ENCODE measurements at regions of chr11 and their contacts with region 1.

Region 1: GRCh38 chr11:2420502-2421225 is 20.1 kb downstream of the TSSC4 start:
- H3K4me3 ChIP-seq: no peak overlapping the region
- H3K27ac ChIP-seq: no peak overlapping the region
- H3K4me1 ChIP-seq: no peaks in the 10 kb centered on the region
- CTCF ChIP-seq: peak; percentile 90

Region 2: DNA sequence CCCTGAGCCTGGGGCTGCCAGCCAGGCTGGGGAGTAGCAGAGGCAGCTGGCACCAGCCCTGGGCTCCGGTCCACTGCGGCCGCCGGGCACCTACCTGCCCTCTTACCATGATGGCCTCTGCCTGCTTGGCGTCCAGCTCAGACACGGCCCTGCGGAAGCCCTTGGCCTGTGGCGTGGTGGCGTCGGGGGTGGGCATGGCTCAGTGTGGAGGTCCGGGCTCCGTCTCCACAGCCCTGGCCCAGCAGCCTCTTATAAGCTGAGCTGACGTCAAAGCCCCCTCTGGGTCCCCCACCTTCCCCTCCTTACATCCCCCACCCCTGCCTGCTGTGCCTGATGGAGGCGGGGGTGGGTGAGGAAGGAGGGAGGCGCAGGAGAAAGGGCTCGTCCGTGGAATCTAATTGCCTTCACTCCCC is 249.1 kb before region 1 on chr11 and contains the start of gene TH:
- CTCF ChIA-PET with region 1: interaction called, 14 read pairs
- POLR2A ChIA-PET with region 1: no interaction called
- H3K4me3 ChIP-seq: no peak within 1 kb of the TSS
- H3K27ac ChIP-seq: no peak within 1 kb of the TSS
- H3K4me1 ChIP-seq: no peaks in the 10 kb centered on the region
- CTCF ChIP-seq: no peak

Region 3: DNA sequence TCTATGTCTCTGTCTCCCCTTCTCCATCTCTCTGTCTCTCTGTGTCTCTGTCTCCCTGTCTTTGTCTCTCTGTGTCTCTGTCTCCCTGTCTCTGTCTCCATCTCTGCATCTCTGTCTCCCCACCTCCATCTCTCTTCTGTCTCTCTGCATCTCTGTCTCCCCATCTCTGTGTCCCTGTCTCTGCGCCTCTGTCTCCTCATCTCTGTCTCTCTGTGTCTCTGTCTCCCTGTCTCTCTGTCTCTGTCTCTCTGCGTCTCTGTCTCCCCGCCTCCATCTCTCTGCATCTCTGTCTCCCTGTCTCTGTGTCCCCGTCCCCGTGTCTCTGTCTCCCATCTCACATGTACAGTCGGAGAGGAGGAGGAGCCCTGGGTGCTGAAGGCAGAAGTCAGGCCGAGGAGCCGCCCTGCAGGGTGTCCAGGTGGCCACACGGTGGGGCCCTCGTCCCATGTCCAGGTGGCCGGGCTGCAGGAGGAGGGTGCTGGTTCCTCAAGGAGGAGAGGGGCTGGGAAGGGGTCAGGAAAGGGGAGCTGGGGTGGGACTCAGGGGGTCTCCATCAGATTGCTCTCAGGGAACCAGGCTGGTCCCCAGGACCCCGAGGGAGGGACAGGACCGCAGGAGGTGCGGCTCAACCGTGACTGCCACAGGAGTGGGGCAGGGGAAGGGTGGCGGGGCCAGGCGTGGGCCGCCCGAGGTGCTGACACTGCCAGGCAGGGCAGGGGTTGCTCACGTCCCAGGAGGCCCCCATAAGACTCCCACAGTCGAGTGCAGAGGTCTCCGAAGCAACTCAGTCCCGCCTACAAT is 223.5 kb before region 1 on chr11:
- CTCF ChIA-PET with region 1: interaction called, 33 read pairs
- POLR2A ChIA-PET with region 1: no interaction called
- H3K4me3 ChIP-seq: no peak overlapping the region
- H3K27ac ChIP-seq: no peak overlapping the region
- H3K4me1 ChIP-seq: no peaks in the 10 kb centered on the region
- CTCF ChIP-seq: peak; percentile 79

Region 4: GRCh38 chr11:2305140-2305840 is 115.4 kb before region 1 on chr11:
- CTCF ChIA-PET with region 1: interaction called, 297 read pairs
- POLR2A ChIA-PET with region 1: interaction called, 19 read pairs
- H3K4me3 ChIP-seq: no peak overlapping the region
- H3K27ac ChIP-seq: no peak overlapping the region
- H3K4me1 ChIP-seq: no peaks in the 10 kb centered on the region
- CTCF ChIP-seq: peak; percentile 82

Region 5: GRCh38 chr11:2351701-2352100 is 69.0 kb before region 1 on chr11:
- CTCF ChIA-PET with region 1: no interaction called
- POLR2A ChIA-PET with region 1: no interaction called
- H3K4me3 ChIP-seq: no peak overlapping the region
- H3K27ac ChIP-seq: no peak overlapping the region
- H3K4me1 ChIP-seq: no peaks in the 10 kb centered on the region
- CTCF ChIP-seq: no peak

Region 6: GRCh38 chr11:2400069-2400760 is 20.4 kb before region 1 on chr11 and contains the start of gene TSSC4:
- CTCF ChIA-PET with region 1: interaction called, 29 read pairs
- POLR2A ChIA-PET with region 1: interaction called, 4 read pairs
- H3K4me3 ChIP-seq: peak within 1 kb of the TSS; percentile 99
- H3K27ac ChIP-seq: peak within 1 kb of the TSS; percentile 53
- H3K4me1 ChIP-seq: no peaks in the 10 kb centered on the region
- CTCF ChIP-seq: peak; percentile 97

Region 7: GRCh38 chr11:2532704-2533586 is 112.3 kb after region 1 on chr11:
- CTCF ChIA-PET with region 1: interaction called, 208 read pairs
- POLR2A ChIA-PET with region 1: no interaction called
- H3K4me3 ChIP-seq: no peak overlapping the region
- H3K27ac ChIP-seq: no peak overlapping the region
- H3K4me1 ChIP-seq: no peaks in the 10 kb centered on the region
- CTCF ChIP-seq: peak; percentile 93

Region 8: GRCh38 chr11:2586087-2586792 is 165.6 kb after region 1 on chr11:
- CTCF ChIA-PET with region 1: no interaction called
- POLR2A ChIA-PET with region 1: no interaction called
- H3K4me3 ChIP-seq: no peak overlapping the region
- H3K27ac ChIP-seq: no peak overlapping the region
- H3K4me1 ChIP-seq: no peaks in the 10 kb centered on the region
- CTCF ChIP-seq: no peak